Breast epithelium (tissue), 4 donors: ENCODE measurements at regions of chr2 and their contacts with region 1.

Region 1: GRCh38 chr2:200730960-200731359 is 80.8 kb upstream of the BZW1 start:
- DNase-seq: no peak
- H3K4me3 ChIP-seq: no peak overlapping the region
- H3K27ac ChIP-seq: no peak overlapping the region
- H3K4me1 ChIP-seq: no peaks in the 10 kb centered on the region
- H3K27me3 ChIP-seq: no peaks in the 10 kb centered on the region
- CTCF ChIP-seq: no peak
- POLR2A ChIP-seq: no peak

Region 2: DNA sequence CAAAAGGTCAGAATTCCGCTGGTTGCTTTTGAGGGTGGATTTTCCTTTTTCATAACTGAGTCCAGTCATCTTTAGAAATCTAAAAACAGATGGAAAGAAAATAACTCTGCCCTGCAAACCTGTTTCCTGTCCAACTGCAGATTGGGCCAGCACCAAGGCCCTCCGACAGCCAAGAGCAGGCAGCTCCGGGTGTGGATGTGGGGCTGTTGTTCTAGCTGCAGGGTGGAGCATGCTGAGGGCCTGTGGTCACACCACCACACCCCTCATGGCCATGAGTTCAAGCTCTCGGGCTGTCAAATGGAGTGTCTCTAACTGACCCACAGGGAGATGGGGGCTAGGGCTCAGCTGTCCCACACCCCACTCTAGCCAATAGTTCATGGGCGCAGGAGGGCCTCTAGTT is 11.5 kb after region 1 on chr2:
- intact Hi-C with region 1: no loop called
- DNase-seq: no peak
- H3K4me3 ChIP-seq: no peak overlapping the region
- H3K27ac ChIP-seq: peak overlapping the region; percentile 79 to 93
- H3K4me1 ChIP-seq: peaks cover 4 to 16% of the 10 kb centered on the region in 2 donors
- H3K27me3 ChIP-seq: no peaks in the 10 kb centered on the region
- CTCF ChIP-seq: no peak
- POLR2A ChIP-seq: no peak

Region 3: DNA sequence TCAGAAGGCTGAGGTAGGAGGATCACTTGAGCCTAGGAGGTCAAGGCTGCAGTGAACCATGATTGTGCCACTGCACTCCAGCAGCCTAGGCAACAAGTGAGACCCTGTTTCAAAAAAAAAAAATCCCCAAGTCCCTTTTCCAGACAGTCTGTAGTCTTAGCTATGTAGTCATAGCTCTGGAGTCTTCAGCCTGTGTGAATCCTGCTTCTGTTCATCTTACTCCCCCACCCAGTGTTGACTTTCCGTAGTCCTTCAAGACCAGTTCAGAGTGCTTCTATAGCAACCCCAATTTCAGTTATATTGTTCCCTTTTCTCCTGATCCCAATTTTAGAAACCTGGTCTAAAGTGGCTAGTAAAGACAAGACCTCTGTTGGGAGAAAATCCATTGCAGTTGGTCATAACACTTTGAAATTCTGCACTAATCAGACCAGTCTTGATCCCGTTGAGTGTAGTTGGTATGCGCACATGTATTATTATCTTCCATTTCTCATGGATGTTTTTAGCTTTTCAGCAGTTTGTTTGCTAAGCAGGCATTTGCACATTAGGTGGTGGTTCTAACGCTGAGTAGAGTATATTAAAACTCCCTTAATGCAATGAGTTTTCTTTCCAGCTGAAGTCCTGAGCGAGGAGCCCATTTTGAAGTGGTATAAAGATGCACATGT is 89.7 kb after region 1 on chr2:
- intact Hi-C with region 1: loop called (anchors 2 kb)
- DNase-seq: no peak
- H3K4me3 ChIP-seq: no peak overlapping the region
- H3K27ac ChIP-seq: no peak overlapping the region
- H3K4me1 ChIP-seq: no peaks in the 10 kb centered on the region
- H3K27me3 ChIP-seq: no peaks in the 10 kb centered on the region
- CTCF ChIP-seq: no peak
- POLR2A ChIP-seq: no peak